ENCODE measurements at regions of chr9 and their contacts with region 1.

Region 1: DNA sequence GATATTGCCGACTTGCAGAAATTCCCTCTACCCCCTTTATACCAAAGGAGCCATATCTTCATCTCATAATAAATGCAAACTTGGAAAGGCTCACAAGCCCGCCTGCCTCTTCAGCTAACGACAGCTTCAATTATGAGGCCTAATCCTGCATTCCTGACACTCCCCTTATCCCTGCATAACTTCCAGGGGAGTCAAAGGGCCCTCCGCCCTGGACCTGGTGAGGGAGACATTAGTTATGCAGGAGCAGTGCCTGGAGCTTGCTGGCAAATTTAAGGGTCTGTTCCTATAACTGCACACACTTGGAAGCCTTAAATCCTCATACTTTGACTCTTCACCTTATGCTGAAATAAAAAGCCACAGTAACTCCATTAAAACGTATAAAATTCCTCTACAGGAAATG is 617.9 kb downstream of the BNC2 start:
- DNase-seq: no peak
- H3K4me3 ChIP-seq: no peak overlapping the region
- CTCF ChIP-seq: no peak

Region 2: DNA sequence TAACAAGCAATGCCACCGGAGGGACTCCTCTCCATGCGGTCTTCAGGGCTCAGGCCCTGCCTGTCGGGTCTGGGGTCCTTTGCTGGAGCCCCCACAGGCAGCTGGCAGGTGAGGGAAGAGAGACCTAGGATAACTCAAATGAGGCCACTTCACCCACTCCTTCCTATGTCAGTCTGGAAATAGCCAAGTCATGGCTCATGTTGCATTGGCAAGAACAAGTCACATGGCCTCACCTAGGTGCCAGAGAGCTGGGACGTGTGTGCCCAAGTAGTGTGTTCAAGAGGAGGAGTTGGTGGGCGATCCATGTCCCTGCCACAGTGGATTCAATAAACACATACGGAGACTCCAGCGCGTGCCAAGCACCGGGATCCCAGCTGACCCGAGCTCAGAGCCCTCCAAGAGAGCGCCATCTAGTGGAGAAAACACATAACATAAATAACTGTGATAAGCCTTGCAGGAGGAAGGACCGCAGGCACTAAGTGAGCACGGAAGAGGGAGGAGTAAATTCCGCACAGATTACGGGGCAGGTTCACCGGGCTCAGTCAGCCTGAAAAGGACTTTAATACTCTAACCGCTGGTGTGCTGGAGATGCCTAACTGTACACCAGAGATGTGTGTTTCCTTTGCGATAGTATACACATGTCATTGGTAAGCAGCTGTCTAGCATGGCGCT is 118.9 kb before region 1 on chr9:
- in situ Hi-C with region 1: no loop called
- DNase-seq: no peak
- H3K4me3 ChIP-seq: no peak overlapping the region
- CTCF ChIP-seq: peak; percentile 53

Region 3: DNA sequence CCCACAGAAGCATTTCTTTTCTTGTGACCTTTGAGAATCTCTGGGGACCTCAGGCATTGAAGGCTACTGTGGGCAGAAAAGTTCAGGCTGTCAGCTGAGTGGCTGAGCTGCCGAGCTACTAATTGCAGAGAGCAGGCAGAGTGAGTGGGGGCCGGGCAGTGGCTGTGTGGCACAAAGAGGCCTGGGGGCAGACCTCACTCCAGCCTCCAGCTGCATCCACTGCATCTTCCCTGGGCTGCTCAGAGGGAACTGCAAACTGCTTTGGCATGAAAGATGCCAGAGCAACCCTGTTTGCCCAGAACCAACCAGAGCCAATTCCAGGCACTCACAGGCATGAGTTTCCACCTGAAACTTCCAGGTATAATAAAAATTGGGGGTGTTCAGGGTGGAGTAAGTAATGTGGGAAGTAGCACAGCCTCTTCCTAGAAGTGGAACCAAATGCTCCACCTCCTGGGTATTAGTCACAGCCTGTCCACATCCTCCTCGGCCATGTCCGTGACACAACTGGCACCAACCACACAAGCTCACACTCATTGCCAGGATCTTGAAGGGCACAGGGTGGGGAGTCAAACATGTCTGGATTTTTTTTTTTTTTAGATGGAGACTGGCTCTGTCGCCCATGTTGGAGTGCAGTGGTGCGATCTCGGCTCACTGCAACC is 69.0 kb after region 1 on chr9:
- in situ Hi-C with region 1: loop called (anchors 5 kb)
- DNase-seq: no peak
- H3K4me3 ChIP-seq: no peak overlapping the region
- CTCF ChIP-seq: no peak

Measured in astrocyte of the cerebellum (primary cell).